ENCODE measurements at regions of chr4 and their contacts with region 1.

Region 1: DNA sequence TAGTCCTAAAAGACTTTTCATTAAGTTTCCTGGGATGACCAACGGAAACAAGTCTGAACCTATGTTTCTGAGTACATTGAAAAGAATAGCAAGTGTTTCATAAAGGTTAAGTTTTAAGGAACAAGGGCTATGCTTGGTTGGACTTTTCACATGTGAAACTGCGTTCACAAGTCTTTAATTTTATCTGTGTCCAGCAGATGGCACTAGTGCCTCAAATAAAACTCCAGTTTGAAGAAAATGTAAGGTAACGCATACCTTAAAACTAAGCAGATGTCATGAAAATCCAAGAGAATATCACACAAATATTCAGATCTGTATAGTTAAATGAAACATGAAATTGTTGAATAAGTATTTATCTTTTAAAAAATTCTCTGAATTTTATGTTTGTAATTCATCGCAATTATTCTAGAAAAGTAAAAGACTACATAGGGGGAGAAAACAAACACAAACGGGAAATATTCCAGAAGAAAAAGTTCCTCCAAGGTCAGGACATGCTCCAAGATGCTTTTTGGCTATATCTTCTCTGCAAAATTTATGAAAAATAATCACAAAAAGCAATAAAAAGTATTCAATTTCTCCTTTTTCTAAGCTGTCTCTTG is 89.6 kb upstream of the MAD2L1 start:
- DNase-seq: peak; percentile 29
- ATAC-seq: no peak
- H3K4me3 Mint-ChIP-seq: no peak overlapping the region
- H3K27ac Mint-ChIP-seq: no peak overlapping the region
- H3K4me1 Mint-ChIP-seq: no peaks in the 10 kb centered on the region
- H3K27me3 Mint-ChIP-seq: no peaks in the 10 kb centered on the region

Region 2: GRCh38 chr4:120007191-120007871 is 148.9 kb before region 1 on chr4:
- CTCF ChIA-PET with region 1: no interaction called
- POLR2A ChIA-PET with region 1: no interaction called
- intact Hi-C with region 1: no loop called
- DNase-seq: no peak
- ATAC-seq: peak; percentile 51
- H3K4me3 Mint-ChIP-seq: no peak overlapping the region
- H3K27ac Mint-ChIP-seq: no peak overlapping the region
- H3K4me1 Mint-ChIP-seq: peaks cover 3% of the 10 kb centered on the region
- H3K27me3 Mint-ChIP-seq: peaks cover 19% of the 10 kb centered on the region

Region 3: DNA sequence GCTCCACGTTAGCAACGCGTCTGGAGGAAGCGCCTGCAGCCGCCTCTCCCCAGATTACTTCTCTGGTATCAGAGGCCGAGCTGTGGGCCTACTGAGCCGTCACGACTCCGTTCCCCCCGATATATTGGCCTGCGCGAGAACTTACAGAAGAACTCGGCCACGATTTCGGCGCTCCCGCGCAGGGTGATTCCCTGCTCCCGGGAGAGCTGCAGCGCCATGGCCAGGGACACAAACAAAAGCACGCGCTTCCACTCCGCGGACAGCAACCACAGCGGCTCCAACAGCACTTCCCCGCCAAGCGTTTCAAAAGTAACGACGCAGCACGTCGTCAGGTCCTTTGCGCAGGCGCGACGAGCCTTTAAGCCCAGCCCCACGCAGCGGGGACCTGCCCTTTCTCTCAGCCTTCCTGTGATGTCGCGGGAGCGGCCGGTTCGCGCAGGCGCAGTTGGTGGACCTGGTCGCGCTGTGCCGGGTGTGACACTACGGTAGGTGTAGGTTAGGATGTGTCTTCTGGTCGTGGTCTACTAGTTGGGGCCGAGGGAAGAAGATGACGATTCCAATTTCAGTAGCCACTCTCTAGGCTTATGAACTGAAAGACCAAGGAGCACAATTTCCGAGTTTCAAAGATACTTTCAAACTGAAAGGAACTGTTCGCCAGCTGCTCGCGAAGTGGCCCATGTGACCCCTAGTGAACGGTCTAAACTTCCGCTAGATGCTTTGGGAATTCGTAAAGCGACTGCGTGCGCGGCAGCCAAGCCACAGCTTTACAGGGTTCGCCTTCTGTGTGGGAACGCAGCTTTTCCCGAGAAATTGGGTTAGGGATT is 89.5 kb before region 1 on chr4 and contains the start of gene MAD2L1:
- CTCF ChIA-PET with region 1: interaction called, 4 read pairs
- POLR2A ChIA-PET with region 1: no interaction called
- intact Hi-C with region 1: loop called (anchors 5 to 10 kb)
- DNase-seq: peak; percentile 99
- ATAC-seq: peak; percentile 94
- H3K4me3 Mint-ChIP-seq: peak within 1 kb of the TSS; percentile 86
- H3K27ac Mint-ChIP-seq: peak within 1 kb of the TSS; percentile 97
- H3K4me1 Mint-ChIP-seq: peaks cover 58% of the 10 kb centered on the region
- H3K27me3 Mint-ChIP-seq: no peaks in the 10 kb centered on the region
- total RNA-seq, gene MAD2L1: 55.8 to 104 TPM

Region 4: DNA sequence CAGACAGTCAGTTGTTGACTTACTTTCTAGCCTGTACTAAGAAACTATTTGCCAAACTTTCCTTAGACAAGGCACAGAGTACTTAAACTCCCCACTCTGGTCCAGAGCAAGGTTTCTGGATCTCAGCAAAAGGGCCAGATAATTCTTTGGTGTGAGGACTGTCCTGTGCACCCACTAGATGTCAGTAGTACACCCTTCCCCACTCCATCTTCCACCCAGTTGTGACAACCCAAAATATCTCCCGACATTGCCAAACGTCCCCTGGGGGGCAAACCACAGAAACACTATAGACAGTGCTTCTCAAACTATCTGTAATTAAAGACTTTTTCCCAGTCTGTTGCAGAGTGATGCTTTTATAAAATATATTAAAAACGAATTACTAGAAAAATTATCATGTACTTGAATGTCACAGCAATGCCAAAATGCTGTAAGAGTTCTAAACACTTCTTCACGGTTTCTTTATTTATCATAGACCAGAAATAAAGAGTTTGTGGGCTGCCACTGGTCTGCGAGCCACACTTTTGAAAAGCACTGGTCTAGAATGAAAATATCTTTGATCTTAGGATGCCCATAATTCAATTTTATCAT is 562.9 kb after region 1 on chr4:
- CTCF ChIA-PET with region 1: no interaction called
- POLR2A ChIA-PET with region 1: no interaction called
- intact Hi-C with region 1: loop called in 1 of 2 experiments (anchors 5 kb)
- DNase-seq: peak; percentile 41
- ATAC-seq: peak; percentile 53
- H3K4me3 Mint-ChIP-seq: no peak overlapping the region
- H3K27ac Mint-ChIP-seq: no peak overlapping the region
- H3K4me1 Mint-ChIP-seq: no peaks in the 10 kb centered on the region
- H3K27me3 Mint-ChIP-seq: peaks cover 11% of the 10 kb centered on the region

Region 5: DNA sequence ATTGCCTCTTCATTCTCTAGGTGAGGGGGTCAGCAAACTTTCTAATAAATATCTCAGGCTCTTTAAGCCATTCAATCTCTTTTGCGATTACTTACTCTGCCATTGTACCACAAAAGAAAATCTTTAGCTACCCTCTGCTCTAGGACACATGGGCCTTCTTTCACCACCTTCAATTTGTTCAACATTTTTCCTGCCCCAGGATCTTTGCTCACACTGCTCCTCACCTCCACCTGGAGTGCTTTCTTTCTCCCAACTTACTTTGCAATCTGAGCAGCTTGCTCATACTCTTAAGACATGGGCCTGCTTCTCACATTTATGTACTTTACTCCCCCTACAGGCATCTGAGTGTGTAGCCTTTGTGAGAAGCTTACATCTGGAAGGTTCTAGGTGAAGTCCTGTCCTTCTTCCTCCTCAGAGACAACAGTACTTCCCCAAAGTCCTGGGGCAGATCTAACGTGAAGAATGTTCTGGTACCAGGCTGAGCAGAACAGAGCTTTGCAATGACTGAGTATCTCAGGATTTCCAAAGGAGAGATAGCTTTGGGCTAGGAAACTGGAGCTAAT is 821.3 kb after region 1 on chr4:
- CTCF ChIA-PET with region 1: interaction called, 3 read pairs
- POLR2A ChIA-PET with region 1: no interaction called
- intact Hi-C with region 1: loop called in 1 of 2 experiments (anchors 10 kb)
- DNase-seq: no peak
- ATAC-seq: peak; percentile 83
- H3K4me3 Mint-ChIP-seq: no peak overlapping the region
- H3K27ac Mint-ChIP-seq: no peak overlapping the region
- H3K4me1 Mint-ChIP-seq: peaks cover 5% of the 10 kb centered on the region
- H3K27me3 Mint-ChIP-seq: no peaks in the 10 kb centered on the region

Region 6: GRCh38 chr4:121656269-121656641 is 1500.0 kb after region 1 on chr4:
- CTCF ChIA-PET with region 1: no interaction called
- POLR2A ChIA-PET with region 1: no interaction called
- intact Hi-C with region 1: loop called in 1 of 2 experiments (anchors 10 kb)
- DNase-seq: peak; percentile 61
- ATAC-seq: peak; percentile 57
- H3K4me3 Mint-ChIP-seq: no peak overlapping the region
- H3K27ac Mint-ChIP-seq: no peak overlapping the region
- H3K4me1 Mint-ChIP-seq: no peaks in the 10 kb centered on the region
- H3K27me3 Mint-ChIP-seq: peaks cover 3% of the 10 kb centered on the region

Measured in activated CD4-positive, alpha-beta T cell treated with anti-CD3 and anti-CD28 coated beads for 36 hours (primary cell).